ENCODE measurements at regions of chr1 and their contacts with region 1.

Region 1: GRCh38 chr1:111755331-111756123 is at the start of gene DDX20:
- DNase-seq: peak; percentile 91
- H3K4me3 ChIP-seq: peak within 1 kb of the TSS; percentile 44 to 89 (median 58)
- H3K27ac ChIP-seq: peak within 1 kb of the TSS; percentile 23 to 89 (median 86)
- H3K4me1 ChIP-seq: peaks cover 6 to 9% of the 10 kb centered on the region in 2 donors
- H3K27me3 ChIP-seq: no peaks in the 10 kb centered on the region
- CTCF ChIP-seq: peak; percentile 59 to 98 (median 86)
- POLR2A ChIP-seq: peak in 1 of 2 donors; percentile 65
- total RNA-seq, gene DDX20: 15.7 to 32.6 (median 20.8) TPM

Region 2: DNA sequence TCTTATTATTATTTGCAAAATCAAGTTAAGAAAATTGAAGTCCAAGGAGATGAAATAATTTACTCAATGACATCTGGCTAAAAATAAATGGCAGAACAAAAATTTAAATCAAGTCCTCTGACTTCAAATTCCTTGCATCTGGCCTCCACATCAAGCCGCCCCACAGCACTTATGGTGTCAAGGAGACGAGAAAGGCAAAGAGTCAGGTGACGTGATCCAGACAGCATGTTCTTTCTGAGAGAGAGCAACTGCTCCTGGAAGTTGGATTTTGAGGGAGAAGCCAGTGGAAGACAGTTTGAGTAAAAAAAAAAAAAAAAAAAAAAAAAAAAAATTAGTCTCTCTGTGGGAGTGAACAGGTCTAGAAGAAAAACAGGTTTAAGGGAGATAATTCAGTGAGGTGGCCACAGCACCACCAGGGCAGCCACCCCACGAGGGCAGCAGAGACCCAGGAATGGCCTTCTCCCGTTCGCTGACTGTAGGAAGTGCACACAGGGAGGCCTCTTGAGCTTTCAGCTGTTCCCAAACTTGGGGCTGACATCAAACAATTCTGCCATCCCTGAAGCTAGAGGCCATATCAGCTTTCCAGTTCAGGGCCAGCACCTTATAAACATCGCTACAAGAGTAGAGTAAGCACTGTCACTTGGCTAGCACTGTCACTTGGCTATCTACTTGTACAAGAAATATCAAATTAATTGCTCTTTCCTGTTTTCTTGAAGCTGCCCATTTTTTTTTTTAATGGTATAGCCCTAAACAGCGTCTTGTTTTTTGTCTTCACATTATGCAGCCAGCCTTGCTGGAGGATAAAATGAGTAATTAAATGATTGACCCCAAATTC is 273.9 kb before region 1 on chr1:
- intact Hi-C with region 1: loop called (anchors 10 kb)
- DNase-seq: peak; percentile 80 to 83
- H3K4me3 ChIP-seq: no peak overlapping the region
- H3K27ac ChIP-seq: no peak overlapping the region
- H3K4me1 ChIP-seq: no peaks in the 10 kb centered on the region
- H3K27me3 ChIP-seq: no peaks in the 10 kb centered on the region
- CTCF ChIP-seq: peak; percentile 19 to 83 (median 70)
- POLR2A ChIP-seq: no peak

Region 3: DNA sequence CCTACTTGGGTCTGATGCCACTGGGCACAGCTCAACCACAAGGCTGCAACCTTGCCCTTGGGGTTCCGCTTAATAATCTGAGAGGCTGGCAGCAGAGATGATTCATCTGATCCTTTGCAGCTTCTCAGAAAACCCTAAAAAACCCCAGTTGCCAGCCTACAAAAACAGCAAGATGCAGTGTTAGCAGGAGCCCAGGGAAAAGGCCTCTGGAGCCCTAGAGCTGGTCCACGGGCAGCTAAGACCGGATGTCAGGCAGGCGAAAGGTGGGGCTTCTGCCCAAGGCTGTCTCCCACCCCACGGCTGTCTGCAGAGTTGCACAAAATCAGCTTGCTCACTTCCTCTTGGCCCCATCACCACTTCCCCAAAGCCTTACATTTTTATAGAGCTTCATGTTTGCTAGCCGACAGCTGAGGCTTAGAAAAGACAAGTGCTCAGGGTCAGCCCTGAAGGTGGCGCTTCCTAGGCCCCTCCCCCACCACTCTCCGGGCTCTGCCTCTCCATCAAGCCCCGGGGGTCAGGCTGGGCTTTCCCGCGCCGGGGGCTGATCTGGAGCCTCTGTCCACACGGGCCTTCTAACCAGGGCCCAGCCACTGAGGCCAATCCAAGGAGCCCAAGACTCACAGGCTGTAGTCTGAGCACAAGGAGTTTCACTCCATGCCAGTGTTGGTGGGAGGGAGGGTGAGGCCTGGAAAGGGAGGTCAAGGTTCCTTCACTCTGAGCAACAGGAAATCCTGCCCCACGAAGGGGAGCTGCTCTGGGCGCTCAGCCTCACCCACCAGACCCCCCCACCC is 247.9 kb before region 1 on chr1:
- intact Hi-C with region 1: loop called (anchors 5 kb)
- DNase-seq: peak; percentile 63 to 70
- H3K4me3 ChIP-seq: no peak overlapping the region
- H3K27ac ChIP-seq: peak overlapping the region; percentile 88 to 97 (median 95)
- H3K4me1 ChIP-seq: peaks cover 14 to 29% of the 10 kb centered on the region in 2 donors
- H3K27me3 ChIP-seq: no peaks in the 10 kb centered on the region
- CTCF ChIP-seq: no peak
- POLR2A ChIP-seq: no peak

Region 4: GRCh38 chr1:111804772-111805171 is 49.2 kb after region 1 on chr1:
- intact Hi-C with region 1: no loop called
- DNase-seq: no peak
- H3K4me3 ChIP-seq: no peak overlapping the region
- H3K27ac ChIP-seq: no peak overlapping the region
- H3K4me1 ChIP-seq: no peaks in the 10 kb centered on the region
- H3K27me3 ChIP-seq: no peaks in the 10 kb centered on the region
- CTCF ChIP-seq: no peak
- POLR2A ChIP-seq: no peak

Region 5: DNA sequence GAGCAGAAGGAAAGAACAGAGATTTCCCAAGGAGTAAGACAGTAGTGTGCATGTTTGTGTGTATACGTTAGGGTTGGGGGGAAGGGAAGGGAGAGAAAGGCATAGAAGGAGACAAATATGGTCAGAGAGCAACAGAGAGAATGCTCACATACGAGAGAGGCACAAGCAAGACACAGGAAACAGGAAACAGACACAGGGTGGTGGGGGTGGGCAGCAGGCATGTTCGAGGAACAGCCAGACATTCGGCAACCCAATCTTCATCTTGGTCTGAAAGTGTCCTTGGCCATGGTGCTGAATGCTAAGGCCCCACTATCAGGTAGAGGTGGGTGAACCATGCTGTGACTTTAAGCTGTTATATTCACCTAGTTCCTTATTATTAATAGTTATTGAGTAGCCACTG is 109.3 kb after region 1 on chr1:
- intact Hi-C with region 1: no loop called
- DNase-seq: no peak
- H3K4me3 ChIP-seq: no peak overlapping the region
- H3K27ac ChIP-seq: no peak overlapping the region
- H3K4me1 ChIP-seq: no peaks in the 10 kb centered on the region
- H3K27me3 ChIP-seq: no peaks in the 10 kb centered on the region
- CTCF ChIP-seq: no peak
- POLR2A ChIP-seq: no peak

Measured in thyroid gland (tissue), 4 donors.